ENCODE measurements at regions of chr2 and their contacts with region 1.

Region 1: GRCh38 chr2:109510136-109511028 is 103.4 kb downstream of the SEPTIN10 start:
- DNase-seq: peak; percentile 87
- H3K4me3 ChIP-seq: no peak overlapping the region; a peak in 1 of 4 replicates
- H3K27ac ChIP-seq: no peak overlapping the region
- H3K4me1 ChIP-seq: peaks cover 4 to 19% of the 10 kb centered on the region in 2 experiments; a peak in 2 of 4 replicates
- H3K27me3 ChIP-seq: no peaks in the 10 kb centered on the region
- CTCF ChIP-seq: peak; percentile 86
- EP300 ChIP-seq: no peak
- RAD21 ChIP-seq: peak; percentile 97

Region 2: GRCh38 chr2:109153005-109153784 is 357.2 kb before region 1 on chr2:
- CTCF ChIA-PET with region 1: interaction called, 13 read pairs
- POLR2A ChIA-PET with region 1: no interaction called
- DNase-seq: no peak
- H3K4me3 ChIP-seq: no peak overlapping the region
- H3K27ac ChIP-seq: peak overlapping the region in 1 of 2 experiments; percentile 76; a peak in 1 of 4 replicates
- H3K4me1 ChIP-seq: peaks cover 0 to 41% of the 10 kb centered on the region in 2 experiments; a peak in 1 of 4 replicates
- H3K27me3 ChIP-seq: no peaks in the 10 kb centered on the region
- CTCF ChIP-seq: no peak
- EP300 ChIP-seq: no peak
- RAD21 ChIP-seq: no peak

Region 3: GRCh38 chr2:109423556-109424401 is 86.6 kb before region 1 on chr2:
- CTCF ChIA-PET with region 1: interaction called, 10 read pairs
- POLR2A ChIA-PET with region 1: no interaction called
- DNase-seq: no peak
- H3K4me3 ChIP-seq: no peak overlapping the region
- H3K27ac ChIP-seq: no peak overlapping the region
- H3K4me1 ChIP-seq: peaks cover 9 to 11% of the 10 kb centered on the region in 2 experiments; a peak in 2 of 4 replicates
- H3K27me3 ChIP-seq: no peaks in the 10 kb centered on the region
- CTCF ChIP-seq: no peak
- EP300 ChIP-seq: no peak
- RAD21 ChIP-seq: no peak

Region 4: DNA sequence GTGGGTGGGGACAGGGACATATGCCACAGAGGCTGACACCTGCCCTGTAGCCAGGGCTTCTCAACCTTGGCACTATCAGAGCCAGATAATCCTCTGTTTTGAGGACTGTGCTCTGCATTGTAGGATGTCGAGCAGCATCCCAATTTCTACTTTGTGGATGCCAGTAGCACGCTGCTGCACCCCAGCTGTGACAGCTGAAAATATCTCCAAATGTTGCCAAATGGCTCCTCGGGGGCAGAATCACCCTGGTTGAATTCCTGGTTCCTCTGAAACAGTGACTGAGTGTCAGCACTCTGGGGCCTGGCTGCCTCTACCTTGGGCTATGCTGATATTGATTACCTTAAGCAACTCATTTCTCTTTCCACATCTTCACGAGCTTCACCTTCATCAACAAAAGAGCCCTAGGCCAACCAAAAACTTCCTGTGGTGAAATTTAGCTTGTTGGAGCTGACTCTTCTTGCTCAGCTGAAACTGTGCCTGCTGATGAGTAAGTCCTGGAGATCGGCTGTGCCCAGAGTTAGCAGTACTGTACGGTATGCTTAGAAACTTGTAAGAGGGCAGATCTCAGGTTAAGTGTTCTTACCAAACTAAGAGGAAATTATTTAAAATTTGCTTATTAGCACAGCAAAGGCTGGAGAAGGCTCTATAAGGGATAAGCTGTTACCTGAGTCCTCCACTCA is 34.7 kb before region 1 on chr2:
- CTCF ChIA-PET with region 1: interaction called, 24 read pairs
- POLR2A ChIA-PET with region 1: no interaction called
- DNase-seq: no peak
- H3K4me3 ChIP-seq: no peak overlapping the region
- H3K27ac ChIP-seq: no peak overlapping the region
- H3K4me1 ChIP-seq: peaks cover 14 to 34% of the 10 kb centered on the region in 2 experiments
- H3K27me3 ChIP-seq: no peaks in the 10 kb centered on the region
- CTCF ChIP-seq: no peak
- EP300 ChIP-seq: no peak
- RAD21 ChIP-seq: peak; percentile 30; the same call in 1 of the 2 replicates

Region 5: DNA sequence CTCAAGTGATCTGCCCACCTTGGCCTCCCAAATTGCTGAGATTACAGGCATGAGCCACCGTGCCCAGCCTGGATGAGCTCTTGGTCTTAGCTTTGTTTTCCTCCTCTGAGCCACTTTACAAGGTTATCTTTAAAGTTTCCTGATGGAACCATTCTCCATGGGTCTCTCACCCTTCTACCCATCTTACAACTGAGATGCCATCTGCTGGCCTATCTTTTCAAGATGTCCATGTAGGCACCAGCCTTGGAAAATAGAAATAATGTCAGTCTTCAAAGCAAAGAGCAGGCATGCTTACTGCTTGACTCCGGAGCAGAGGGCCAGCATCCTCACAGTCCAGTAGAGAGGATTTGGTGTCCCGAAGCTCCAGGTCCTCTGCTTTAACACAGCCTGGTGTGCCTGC is 20.4 kb before region 1 on chr2:
- CTCF ChIA-PET with region 1: interaction called, 17 read pairs
- POLR2A ChIA-PET with region 1: no interaction called
- DNase-seq: no peak
- H3K4me3 ChIP-seq: no peak overlapping the region
- H3K27ac ChIP-seq: no peak overlapping the region
- H3K4me1 ChIP-seq: peaks cover 0 to 6% of the 10 kb centered on the region in 2 experiments; a peak in 1 of 4 replicates
- H3K27me3 ChIP-seq: no peaks in the 10 kb centered on the region
- CTCF ChIP-seq: peak; percentile 28
- EP300 ChIP-seq: no peak
- RAD21 ChIP-seq: no peak

Region 6: GRCh38 chr2:109523536-109524361 is 13.4 kb after region 1 on chr2:
- CTCF ChIA-PET with region 1: interaction called, 11 read pairs
- POLR2A ChIA-PET with region 1: no interaction called
- DNase-seq: no peak
- H3K4me3 ChIP-seq: no peak overlapping the region
- H3K27ac ChIP-seq: no peak overlapping the region
- H3K4me1 ChIP-seq: no peaks in the 10 kb centered on the region
- H3K27me3 ChIP-seq: no peaks in the 10 kb centered on the region
- CTCF ChIP-seq: no peak
- EP300 ChIP-seq: no peak
- RAD21 ChIP-seq: no peak